ENCODE measurements at regions of chr1 and their contacts with region 1.

Region 1: DNA sequence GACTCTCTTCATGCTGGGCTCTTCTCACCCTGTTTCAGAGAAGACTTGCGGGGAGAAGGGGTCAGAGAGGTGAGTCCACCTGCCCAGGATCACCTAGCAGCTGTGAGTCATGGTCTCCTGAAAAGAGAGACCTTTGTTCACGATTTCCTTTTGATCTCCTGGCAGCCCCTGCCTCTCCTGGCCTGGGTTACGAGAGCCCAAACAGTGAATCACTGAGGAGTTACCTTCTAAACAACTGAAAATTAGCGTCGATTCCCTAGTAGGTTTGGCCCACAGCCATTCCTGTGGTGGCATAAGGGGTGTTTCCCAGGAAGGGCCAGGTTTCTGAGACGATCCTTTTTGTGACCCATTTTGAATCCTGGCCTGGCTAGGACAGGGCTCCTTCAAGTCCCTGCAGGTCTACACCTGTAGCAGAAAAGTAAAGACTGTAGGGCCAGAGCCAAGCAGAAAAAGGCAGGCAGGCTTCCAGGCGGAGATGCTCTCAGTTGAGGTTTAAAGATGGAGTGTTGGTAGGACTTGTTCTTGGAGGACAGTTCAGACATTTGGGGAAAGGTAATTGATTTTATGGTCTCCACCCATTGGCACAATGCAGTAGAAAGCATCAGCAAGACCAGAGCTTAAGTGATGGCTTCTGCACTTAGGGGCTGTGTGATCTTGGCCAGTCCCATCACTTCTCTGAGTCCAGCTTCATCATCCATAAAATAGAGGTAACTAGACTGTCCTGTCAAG is 2.1 kb upstream of the PLA2G2E start:
- DNase-seq: peak; percentile 86 to 97
- H3K4me3 ChIP-seq: no peak overlapping the region
- H3K27ac ChIP-seq: peak overlapping the region; percentile 92
- H3K4me1 ChIP-seq: peaks cover 74% of the 10 kb centered on the region
- H3K27me3 ChIP-seq: no peaks in the 10 kb centered on the region
- CTCF ChIP-seq: no peak

Region 2: GRCh38 chr1:19949016-19949415 is 23.5 kb after region 1 on chr1:
- CTCF ChIA-PET with region 1: no interaction called
- POLR2A ChIA-PET with region 1: interaction called, 4 read pairs
- intact Hi-C with region 1: loop called (anchors 1 kb)
- DNase-seq: peak; percentile 77 to 89
- H3K4me3 ChIP-seq: no peak overlapping the region
- H3K27ac ChIP-seq: peak overlapping the region; percentile 49
- H3K4me1 ChIP-seq: peaks cover 6% of the 10 kb centered on the region
- H3K27me3 ChIP-seq: no peaks in the 10 kb centered on the region
- CTCF ChIP-seq: no peak

Region 3: GRCh38 chr1:19974822-19975416 is 49.4 kb after region 1 on chr1:
- CTCF ChIA-PET with region 1: no interaction called
- POLR2A ChIA-PET with region 1: interaction called, 3 read pairs
- intact Hi-C with region 1: loop called (anchors 1 kb)
- DNase-seq: peak; percentile 58 to 62
- H3K4me3 ChIP-seq: no peak overlapping the region
- H3K27ac ChIP-seq: no peak overlapping the region
- H3K4me1 ChIP-seq: no peaks in the 10 kb centered on the region
- H3K27me3 ChIP-seq: no peaks in the 10 kb centered on the region
- CTCF ChIP-seq: peak; percentile 66

Region 4: DNA sequence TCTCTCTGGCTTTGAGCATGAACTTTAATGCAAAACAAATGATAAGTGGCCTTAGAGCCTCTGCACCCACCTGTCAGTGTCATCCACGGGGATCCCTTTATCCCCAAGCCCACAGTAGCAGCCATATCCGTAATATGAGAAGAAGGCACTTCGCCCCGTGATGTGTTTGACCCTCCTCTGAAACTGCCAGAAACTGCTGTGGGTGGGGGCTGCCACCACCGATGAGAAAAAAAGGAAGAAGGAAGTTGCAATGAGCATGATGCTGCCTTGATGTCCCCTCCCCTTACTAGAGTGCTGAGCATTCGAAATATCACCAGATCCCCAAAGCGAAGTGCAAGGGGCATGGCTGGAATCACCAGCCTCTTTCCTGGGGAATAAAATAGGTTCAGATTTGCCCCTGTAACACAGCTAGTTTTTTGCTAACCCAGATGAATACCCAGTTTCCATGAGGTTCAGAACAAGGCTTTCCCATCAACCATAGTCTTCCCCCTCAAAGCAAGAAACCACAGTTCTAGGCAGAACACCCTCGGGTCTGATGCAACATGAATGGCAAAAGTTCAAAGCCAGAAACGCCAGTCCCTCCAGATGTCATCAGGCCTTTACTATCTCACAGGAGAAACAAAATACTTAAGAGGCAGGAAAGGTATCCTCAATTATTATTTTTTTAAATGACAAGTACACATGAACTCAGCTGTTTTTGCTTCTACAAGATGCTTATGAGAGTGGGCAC is 249.6 kb after region 1 on chr1:
- CTCF ChIA-PET with region 1: no interaction called
- POLR2A ChIA-PET with region 1: interaction called, 10 read pairs
- intact Hi-C with region 1: no loop called
- DNase-seq: no peak
- H3K4me3 ChIP-seq: no peak overlapping the region
- H3K27ac ChIP-seq: no peak overlapping the region
- H3K4me1 ChIP-seq: peaks cover 16% of the 10 kb centered on the region
- H3K27me3 ChIP-seq: no peaks in the 10 kb centered on the region
- CTCF ChIP-seq: no peak

Region 5: GRCh38 chr1:21594935-21595897 is 1669.7 kb after region 1 on chr1:
- CTCF ChIA-PET with region 1: no interaction called
- POLR2A ChIA-PET with region 1: no interaction called
- intact Hi-C with region 1: no loop called
- DNase-seq: peak in 1 of 2 experiments; percentile 64
- H3K4me3 ChIP-seq: no peak overlapping the region
- H3K27ac ChIP-seq: no peak overlapping the region
- H3K4me1 ChIP-seq: peaks cover 11% of the 10 kb centered on the region; the same call in 1 of the 2 replicates
- H3K27me3 ChIP-seq: no peaks in the 10 kb centered on the region
- CTCF ChIP-seq: peak; percentile 79

Measured in PC-9 (cell line).